ENCODE measurements at regions of chr1 and their contacts with region 1.

Region 1: GRCh38 chr1:17494114-17494729 is 45.3 kb upstream of the ARHGEF10L start:
- DNase-seq: peak; percentile 73 to 86
- ATAC-seq: peak; percentile 79 to 96 (median 91)
- H3K4me3 ChIP-seq: no peak overlapping the region
- H3K27ac ChIP-seq: no peak overlapping the region
- H3K4me1 ChIP-seq: no peaks in the 10 kb centered on the region
- H3K27me3 ChIP-seq: no peaks in the 10 kb centered on the region
- CTCF ChIP-seq: peak; percentile 90

Region 2: DNA sequence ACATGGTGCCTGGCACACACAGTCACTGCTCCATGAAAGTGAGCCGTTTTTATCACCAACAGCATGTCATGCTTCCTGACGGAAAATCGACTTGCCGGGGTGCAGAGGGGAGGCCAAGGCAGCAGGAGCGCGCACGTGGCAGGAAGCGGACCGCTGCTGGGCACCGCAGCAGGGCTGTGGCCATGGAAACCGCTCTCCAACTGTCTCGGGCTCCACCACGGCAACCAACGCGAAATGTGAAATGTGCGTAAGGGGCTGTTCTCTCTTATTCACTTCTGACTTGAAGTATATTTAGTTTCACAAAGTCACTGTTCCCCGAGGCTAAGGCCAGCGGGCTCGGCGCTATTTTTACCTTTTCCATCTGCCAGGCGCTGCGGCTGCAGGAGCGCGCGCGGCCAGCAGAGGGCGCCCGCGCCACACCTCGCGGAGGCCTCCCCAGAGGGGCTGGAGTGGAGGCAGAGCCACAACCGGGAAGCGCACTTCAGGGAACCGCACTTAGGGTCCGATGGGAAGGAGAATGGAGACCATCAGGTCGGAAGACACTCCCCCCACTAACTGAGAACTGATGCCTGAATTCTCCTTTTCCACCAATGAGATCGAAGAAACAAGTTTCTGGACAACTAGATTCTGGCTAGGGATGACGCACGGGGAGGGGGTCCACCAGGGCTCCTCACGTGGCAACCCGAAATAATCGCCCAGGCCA is 74.4 kb before region 1 on chr1:
- intact Hi-C with region 1: loop called in 1 of 2 experiments (anchors 5 kb)
- DNase-seq: peak; percentile 73 to 87
- ATAC-seq: peak; percentile 92 to 96 (median 94)
- H3K4me3 ChIP-seq: peak overlapping the region; percentile 24
- H3K27ac ChIP-seq: peak overlapping the region; percentile 72
- H3K4me1 ChIP-seq: peaks cover 5% of the 10 kb centered on the region
- H3K27me3 ChIP-seq: no peaks in the 10 kb centered on the region
- CTCF ChIP-seq: peak; percentile 100

Region 3: GRCh38 chr1:18575620-18576019 is 1081.4 kb after region 1 on chr1:
- intact Hi-C with region 1: loop called in 1 of 2 experiments (anchors 10 kb)
- DNase-seq: no peak
- ATAC-seq: peak in 1 of 4 donors; percentile 32
- H3K4me3 ChIP-seq: no peak overlapping the region
- H3K27ac ChIP-seq: no peak overlapping the region
- H3K4me1 ChIP-seq: no peaks in the 10 kb centered on the region
- H3K27me3 ChIP-seq: peaks cover 0 to 16% (median 2%) of the 10 kb centered on the region in 3 donors
- CTCF ChIP-seq: peak; percentile 55